HCT116 (cell line): ENCODE measurements at regions of chr5 and their contacts with region 1.

Region 1: GRCh38 chr5:138128334-138128733 is 10.9 kb downstream of the NME5 start:
- DNase-seq: no peak
- ATAC-seq: no peak
- H3K4me3 ChIP-seq: no peak overlapping the region
- H3K27ac ChIP-seq: no peak overlapping the region
- H3K4me1 ChIP-seq: peaks cover 4 to 6% of the 10 kb centered on the region in 2 experiments; a peak in 3 of 4 replicates
- H3K27me3 ChIP-seq: no peaks in the 10 kb centered on the region
- CTCF ChIP-seq: no peak
- POLR2A ChIP-seq: no peak
- RAD21 ChIP-seq: no peak

Region 2: GRCh38 chr5:137629646-137630045 is 498.7 kb before region 1 on chr5:
- CTCF ChIA-PET with region 1: interaction called, 16 read pairs
- POLR2A ChIA-PET with region 1: interaction called, 3 read pairs
- RAD21 ChIA-PET with region 1: interaction called, 3 to 4 read pairs
- intact Hi-C with region 1: loop called (anchors 1 kb)
- DNase-seq: peak; percentile 51
- ATAC-seq: peak; percentile 95
- H3K4me3 ChIP-seq: no peak overlapping the region
- H3K27ac ChIP-seq: no peak overlapping the region
- H3K4me1 ChIP-seq: peaks cover 0 to 2% of the 10 kb centered on the region in 2 experiments; a peak in 1 of 4 replicates
- H3K27me3 ChIP-seq: no peaks in the 10 kb centered on the region
- CTCF ChIP-seq: peak; percentile 77 to 87 (median 85)
- POLR2A ChIP-seq: no peak
- RAD21 ChIP-seq: peak; percentile 97

Region 3: DNA sequence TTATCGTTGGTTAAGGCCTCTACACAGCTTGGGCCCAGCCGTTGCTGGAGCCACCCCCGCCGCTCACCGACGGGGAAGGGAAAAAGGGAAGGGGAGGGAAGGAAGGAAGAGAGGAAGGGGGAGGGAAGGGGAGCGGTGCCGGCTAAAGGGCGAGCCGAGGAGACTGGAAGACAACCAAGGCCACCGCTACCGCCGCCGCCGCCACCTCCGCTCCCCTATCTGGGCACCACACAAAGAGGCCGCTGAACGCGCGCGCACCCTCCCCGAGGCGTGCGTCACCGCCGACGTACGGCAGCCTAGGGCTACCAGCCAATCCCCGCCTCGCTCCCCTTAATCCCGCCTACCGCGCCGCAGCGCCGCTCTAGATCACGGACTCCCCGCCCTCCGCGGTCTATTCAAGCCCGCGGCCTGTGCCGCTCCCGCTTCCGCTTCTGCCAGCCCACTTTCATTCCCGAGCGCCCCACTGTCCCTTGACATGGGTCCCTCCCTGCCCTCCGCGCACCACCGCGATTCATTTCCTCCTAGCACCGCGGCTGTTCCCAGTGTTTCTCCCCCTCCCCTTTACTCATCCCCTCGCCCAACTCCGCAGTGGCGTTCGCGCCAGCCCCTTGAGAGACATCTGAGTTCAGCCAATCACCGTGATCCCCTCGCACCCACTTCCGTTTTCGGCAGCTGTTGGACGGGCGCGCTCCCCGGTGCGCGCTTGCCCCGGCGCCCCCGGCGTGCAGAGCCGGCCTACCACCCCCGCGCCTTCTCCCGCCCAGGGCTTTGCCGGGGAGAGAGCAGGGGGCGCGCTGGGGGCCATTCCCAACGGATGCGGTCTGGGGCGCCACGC is 374.0 kb before region 1 on chr5 and contains the start of gene HNRNPA0:
- CTCF ChIA-PET with region 1: interaction called, 3 read pairs
- POLR2A ChIA-PET with region 1: no interaction called
- RAD21 ChIA-PET with region 1: no interaction called
- intact Hi-C with region 1: loop called (anchors 1 kb)
- DNase-seq: peak; percentile 95
- ATAC-seq: peak; percentile 89
- H3K4me3 ChIP-seq: peak within 1 kb of the TSS; percentile 87 to 97
- H3K27ac ChIP-seq: peak within 1 kb of the TSS; percentile 91
- H3K4me1 ChIP-seq: peaks cover 0 to 20% of the 10 kb centered on the region in 2 experiments; a peak in 2 of 4 replicates
- H3K27me3 ChIP-seq: no peaks in the 10 kb centered on the region
- CTCF ChIP-seq: no peak
- POLR2A ChIP-seq: peak; percentile 89
- RAD21 ChIP-seq: no peak
- total RNA-seq, gene HNRNPA0: 38.9 TPM

Region 4: GRCh38 chr5:137822158-137822764 is 306.1 kb before region 1 on chr5:
- CTCF ChIA-PET with region 1: no interaction called
- POLR2A ChIA-PET with region 1: no interaction called
- RAD21 ChIA-PET with region 1: no interaction called
- intact Hi-C with region 1: loop called (anchors 5 kb)
- DNase-seq: peak; percentile 40
- ATAC-seq: peak; percentile 90
- H3K4me3 ChIP-seq: no peak overlapping the region
- H3K27ac ChIP-seq: no peak overlapping the region
- H3K4me1 ChIP-seq: 0 out of 4 replicates have a peak, but pooled peaks cover 0 to 4% of the 10 kb centered on the region in 2 experiments
- H3K27me3 ChIP-seq: no peaks in the 10 kb centered on the region
- CTCF ChIP-seq: peak; percentile 47 to 66 (median 59); a peak in 5 of 6 replicates
- POLR2A ChIP-seq: no peak
- RAD21 ChIP-seq: peak; percentile 78

Region 5: GRCh38 chr5:138077065-138077696 is 51.2 kb before region 1 on chr5:
- CTCF ChIA-PET with region 1: interaction called, 67 read pairs
- POLR2A ChIA-PET with region 1: interaction called, 7 read pairs
- RAD21 ChIA-PET with region 1: interaction called, 4 to 7 read pairs
- intact Hi-C with region 1: loop called (anchors 1 kb)
- DNase-seq: peak; percentile 62
- ATAC-seq: peak; percentile 90
- H3K4me3 ChIP-seq: no peak overlapping the region
- H3K27ac ChIP-seq: no peak overlapping the region
- H3K4me1 ChIP-seq: no peaks in the 10 kb centered on the region
- H3K27me3 ChIP-seq: no peaks in the 10 kb centered on the region
- CTCF ChIP-seq: peak; percentile 79 to 94 (median 86)
- POLR2A ChIP-seq: no peak
- RAD21 ChIP-seq: peak; percentile 96